HepG2 (cell line): ENCODE measurements at regions of chr3 and their contacts with region 1.

Region 1: GRCh38 chr3:16550676-16551341 is 37.3 kb upstream of the RFTN1 start:
- DNase-seq: peak; percentile 76
- ATAC-seq: peak; percentile 100
- H3K4me3 ChIP-seq: no peak overlapping the region
- H3K27ac ChIP-seq: no peak overlapping the region
- H3K4me1 ChIP-seq: no peaks in the 10 kb centered on the region
- H3K27me3 ChIP-seq: peaks cover 0 to 21% of the 10 kb centered on the region in 2 experiments; a peak in 1 of 5 replicates
- CTCF ChIP-seq: peak; percentile 91
- EP300 ChIP-seq: no peak
- POLR2A ChIP-seq: no peak
- RAD21 ChIP-seq: peak; percentile 86; the same call in 1 of the 2 replicates

Region 2: GRCh38 chr3:16264708-16265454 is 285.9 kb before region 1 on chr3 and contains the starts of genes DPH3 and OXNAD1:
- CTCF ChIA-PET with region 1: interaction called, 14 read pairs
- POLR2A ChIA-PET with region 1: no interaction called
- in situ Hi-C with region 1: no loop called
- intact Hi-C with region 1: loop called (anchors 1 kb)
- DNase-seq: peak; percentile 98
- ATAC-seq: peak; percentile 98
- H3K4me3 ChIP-seq: peak within 1 kb of the TSS; percentile 88 to 97 (median 97)
- H3K27ac ChIP-seq: peak within 1 kb of the TSS; percentile 93
- H3K4me1 ChIP-seq: peaks cover 36% of the 10 kb centered on the region
- H3K27me3 ChIP-seq: no peaks in the 10 kb centered on the region; a peak in 1 of 5 replicates
- CTCF ChIP-seq: peak; percentile 6; the same call in 1 of the 2 replicates
- EP300 ChIP-seq: peak in 1 of 2 experiments; percentile 30; a peak in 2 of 4 replicates
- POLR2A ChIP-seq: peak; percentile 88 to 95
- RAD21 ChIP-seq: 0 out of 2 replicates have a peak, but pooled peaks have one; percentile 13
- total RNA-seq, gene DPH3: 21.6 and 40.0 TPM in 2 replicates
- total RNA-seq, gene OXNAD1: 18.8 and 25.2 TPM in 2 replicates

Region 3: GRCh38 chr3:16789344-16790120 is 238.7 kb after region 1 on chr3:
- CTCF ChIA-PET with region 1: no interaction called
- POLR2A ChIA-PET with region 1: no interaction called
- in situ Hi-C with region 1: no loop called
- intact Hi-C with region 1: no loop called
- DNase-seq: no peak
- ATAC-seq: no peak
- H3K4me3 ChIP-seq: no peak overlapping the region
- H3K27ac ChIP-seq: no peak overlapping the region
- H3K4me1 ChIP-seq: no peaks in the 10 kb centered on the region
- H3K27me3 ChIP-seq: no peaks in the 10 kb centered on the region
- CTCF ChIP-seq: no peak
- EP300 ChIP-seq: no peak
- POLR2A ChIP-seq: no peak
- RAD21 ChIP-seq: no peak